ENCODE measurements at regions of chr1 and their contacts with region 1.

Region 1: DNA sequence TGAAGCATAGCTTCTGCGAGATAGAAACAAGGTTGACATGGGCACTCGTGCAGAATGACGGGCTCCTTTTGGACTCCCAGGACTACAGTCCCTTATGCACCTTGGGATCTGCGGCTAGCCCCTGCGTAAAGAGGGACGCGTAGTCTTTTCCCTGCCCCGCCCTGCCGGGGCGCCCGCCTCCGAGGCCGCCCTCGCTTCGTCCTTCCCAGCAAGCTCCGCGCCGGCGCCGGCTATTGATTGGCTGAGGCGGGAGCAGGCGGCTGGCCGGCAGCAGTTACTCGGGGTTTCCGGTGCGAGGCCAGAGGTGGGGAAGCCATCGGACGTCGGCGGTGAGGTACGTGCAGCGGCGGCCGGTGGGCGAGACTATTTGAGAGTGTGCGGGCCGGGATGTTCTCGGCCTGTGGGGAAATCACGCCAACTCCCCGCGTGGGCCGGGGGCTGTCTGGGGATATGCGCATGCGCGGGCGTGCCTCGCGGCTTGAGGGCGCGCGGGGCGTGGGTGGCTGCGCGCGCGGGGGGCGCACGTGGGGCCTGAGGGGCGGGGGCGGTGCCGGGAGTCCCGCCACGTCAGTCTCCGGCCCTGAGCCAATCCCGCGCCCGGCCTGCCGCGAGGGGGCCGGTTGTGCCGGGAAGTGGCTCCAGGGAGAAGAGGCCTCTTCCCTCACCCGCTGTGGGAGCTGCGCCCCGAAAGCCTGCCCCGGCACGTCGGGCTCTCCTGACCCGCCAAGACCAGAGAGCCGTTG is at the start of gene TXLNA:
- DNase-seq: peak; percentile 93
- ATAC-seq: peak; percentile 89
- H3K4me3 Mint-ChIP-seq: peak within 1 kb of the TSS; percentile 92
- H3K27ac Mint-ChIP-seq: peak within 1 kb of the TSS; percentile 98
- H3K4me1 Mint-ChIP-seq: peaks cover 28% of the 10 kb centered on the region
- H3K27me3 Mint-ChIP-seq: no peaks in the 10 kb centered on the region
- total RNA-seq, gene TXLNA: 62.5 to 68.8 TPM

Region 2: GRCh38 chr1:32192220-32192948 is 12.8 kb after region 1 on chr1:
- POLR2A ChIA-PET with region 1: interaction called, 11 read pairs
- DNase-seq: no peak
- ATAC-seq: no peak
- H3K4me3 Mint-ChIP-seq: no peak overlapping the region
- H3K27ac Mint-ChIP-seq: no peak overlapping the region
- H3K4me1 Mint-ChIP-seq: peaks cover 52% of the 10 kb centered on the region
- H3K27me3 Mint-ChIP-seq: peaks cover 2% of the 10 kb centered on the region

Region 3: DNA sequence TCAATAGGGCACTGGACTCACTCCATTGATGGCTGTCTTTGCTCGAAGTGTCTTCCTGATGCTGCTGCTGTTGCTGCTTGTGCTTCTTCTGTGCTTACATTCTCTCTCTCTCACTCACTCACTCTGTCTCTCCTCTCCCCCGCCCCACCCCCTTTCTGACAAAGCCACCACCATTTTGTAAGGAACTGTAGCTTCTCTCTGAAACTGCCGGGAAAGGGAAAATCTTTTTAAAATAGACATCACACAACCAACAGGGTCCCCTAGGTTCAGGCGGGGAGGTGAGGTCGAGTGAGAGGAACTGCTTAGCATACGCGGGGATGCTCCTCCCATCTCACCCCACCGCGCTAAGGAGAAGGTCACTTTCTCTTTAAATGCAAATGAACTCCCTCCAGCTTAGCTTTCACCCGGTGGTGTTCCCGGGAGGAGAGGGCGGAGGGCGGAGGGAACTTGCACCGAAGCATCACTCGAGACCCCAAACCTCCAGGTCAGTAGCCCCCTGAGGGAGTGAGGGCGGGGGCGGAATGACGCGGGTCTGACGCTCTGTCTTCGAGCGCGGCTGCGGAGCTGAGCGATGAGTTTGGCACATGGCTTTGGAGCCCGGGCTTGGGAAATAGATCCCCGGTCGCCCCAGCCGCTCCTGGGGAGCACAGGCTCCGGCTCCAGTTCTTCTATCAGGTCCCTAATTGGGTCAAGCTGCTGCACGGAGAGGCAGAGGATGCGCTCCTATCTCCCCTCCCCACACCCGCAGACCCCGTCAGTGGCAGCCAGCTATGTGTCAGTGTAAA is 20.8 kb after region 1 on chr1 and contains the start of gene CCDC28B:
- POLR2A ChIA-PET with region 1: interaction called, 37 read pairs
- DNase-seq: peak; percentile 72
- ATAC-seq: peak; percentile 55
- H3K4me3 Mint-ChIP-seq: peak within 1 kb of the TSS; percentile 84
- H3K27ac Mint-ChIP-seq: peak within 1 kb of the TSS; percentile 91
- H3K4me1 Mint-ChIP-seq: peaks cover 56% of the 10 kb centered on the region
- H3K27me3 Mint-ChIP-seq: peaks cover 2% of the 10 kb centered on the region
- total RNA-seq, gene CCDC28B: 48.6 to 55.6 TPM

Region 4: GRCh38 chr1:32205401-32206370 is 26.1 kb after region 1 on chr1 and contains the start of gene IQCC:
- POLR2A ChIA-PET with region 1: interaction called, 37 read pairs
- DNase-seq: peak; percentile 87
- ATAC-seq: peak; percentile 74
- H3K4me3 Mint-ChIP-seq: peak within 1 kb of the TSS; percentile 90
- H3K27ac Mint-ChIP-seq: peak within 1 kb of the TSS; percentile 85
- H3K4me1 Mint-ChIP-seq: peaks cover 29% of the 10 kb centered on the region
- H3K27me3 Mint-ChIP-seq: no peaks in the 10 kb centered on the region
- total RNA-seq, gene IQCC: 4.9 to 6.0 TPM

Region 5: DNA sequence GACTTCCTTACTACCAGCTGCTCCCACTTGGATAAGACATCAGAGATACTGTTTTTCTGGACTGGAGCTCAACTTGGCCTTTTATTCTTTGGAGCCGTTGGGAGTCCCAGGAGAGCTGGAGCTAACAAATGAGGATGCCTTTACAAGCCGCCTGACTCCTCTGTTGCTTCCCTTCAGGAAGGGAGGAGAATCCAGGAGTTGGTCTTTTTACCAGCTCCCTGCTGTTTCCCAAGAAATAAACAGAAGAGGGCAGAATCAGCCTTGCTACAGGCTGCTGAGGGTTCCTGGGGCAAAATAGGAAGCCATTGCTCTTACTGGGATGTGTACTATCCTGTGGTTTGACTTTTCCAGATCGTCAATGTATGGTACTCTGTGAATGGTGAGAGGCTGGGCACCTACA is 44.1 kb after region 1 on chr1:
- POLR2A ChIA-PET with region 1: no interaction called
- DNase-seq: no peak
- ATAC-seq: no peak
- H3K4me3 Mint-ChIP-seq: peak overlapping the region; percentile 96
- H3K27ac Mint-ChIP-seq: peak overlapping the region; percentile 95
- H3K4me1 Mint-ChIP-seq: peaks cover 20% of the 10 kb centered on the region
- H3K27me3 Mint-ChIP-seq: no peaks in the 10 kb centered on the region